ENCODE measurements at regions of chr11 and their contacts with region 1.

Region 1: GRCh38 chr11:34215806-34216453 is 110.5 kb downstream of the NAT10 start:
- DNase-seq: no peak
- ATAC-seq: no peak
- H3K4me3 ChIP-seq: no peak overlapping the region
- H3K27ac ChIP-seq: peak overlapping the region; percentile 24; the same call in 1 of the 2 replicates
- H3K4me1 ChIP-seq: peaks cover 31% of the 10 kb centered on the region
- H3K27me3 ChIP-seq: no peaks in the 10 kb centered on the region
- CTCF ChIP-seq: no peak

Region 2: GRCh38 chr11:34006876-34007275 is 209.1 kb before region 1 on chr11:
- CTCF ChIA-PET with region 1: no interaction called
- POLR2A ChIA-PET with region 1: no interaction called
- in situ Hi-C with region 1: no loop called
- intact Hi-C with region 1: no loop called
- DNase-seq: no peak
- ATAC-seq: no peak
- H3K4me3 ChIP-seq: no peak overlapping the region
- H3K27ac ChIP-seq: no peak overlapping the region
- H3K4me1 ChIP-seq: no peaks in the 10 kb centered on the region
- H3K27me3 ChIP-seq: no peaks in the 10 kb centered on the region; the same call in 1 of the 2 replicates
- CTCF ChIP-seq: no peak

Region 3: GRCh38 chr11:34427186-34427805 is 211.4 kb after region 1 on chr11:
- CTCF ChIA-PET with region 1: no interaction called
- POLR2A ChIA-PET with region 1: no interaction called
- in situ Hi-C with region 1: no loop called
- intact Hi-C with region 1: no loop called
- DNase-seq: no peak
- ATAC-seq: peak; percentile 88
- H3K4me3 ChIP-seq: no peak overlapping the region
- H3K27ac ChIP-seq: peak overlapping the region; percentile 39; the same call in 1 of the 2 replicates
- H3K4me1 ChIP-seq: peaks cover 6% of the 10 kb centered on the region
- H3K27me3 ChIP-seq: no peaks in the 10 kb centered on the region
- CTCF ChIP-seq: no peak

Region 4: DNA sequence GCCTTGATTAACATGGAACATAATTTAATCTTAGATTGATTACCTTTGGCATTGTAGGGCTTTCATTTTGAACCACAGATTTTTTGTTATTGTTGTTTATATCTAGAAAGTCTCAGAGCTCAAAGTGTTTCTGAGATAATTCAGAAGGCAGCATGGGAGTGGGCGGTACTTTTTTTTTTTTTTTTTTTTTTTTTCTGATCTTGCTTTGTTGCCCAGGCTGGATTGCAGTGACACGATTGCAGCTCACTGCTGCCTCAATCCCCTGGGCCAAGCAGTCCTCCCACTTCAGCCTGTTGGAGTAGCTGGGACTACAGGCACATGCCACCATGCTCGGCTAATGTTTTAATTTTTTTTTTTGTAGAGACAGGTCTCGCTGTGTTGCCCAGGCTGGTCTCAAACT is 244.3 kb after region 1 on chr11:
- CTCF ChIA-PET with region 1: interaction called, 11 read pairs
- POLR2A ChIA-PET with region 1: no interaction called
- in situ Hi-C with region 1: no loop called
- intact Hi-C with region 1: no loop called
- DNase-seq: no peak
- ATAC-seq: no peak
- H3K4me3 ChIP-seq: no peak overlapping the region
- H3K27ac ChIP-seq: no peak overlapping the region
- H3K4me1 ChIP-seq: no peaks in the 10 kb centered on the region
- H3K27me3 ChIP-seq: no peaks in the 10 kb centered on the region
- CTCF ChIP-seq: no peak